CD4-positive, alpha-beta T cell (primary cell): ENCODE measurements at regions of chr1 and their contacts with region 1.

Region 1: GRCh38 chr1:155091071-155091709 is 12.6 kb downstream of the EFNA3 start:
- DNase-seq: peak; percentile 67 to 88 (median 76)
- ATAC-seq: peak; percentile 91
- H3K4me3 ChIP-seq: no peak overlapping the region
- H3K4me3 Mint-ChIP-seq: no peak overlapping the region
- H3K27ac ChIP-seq: no peak overlapping the region
- H3K27ac Mint-ChIP-seq: no peak overlapping the region
- H3K4me1 ChIP-seq: peaks cover 15% of the 10 kb centered on the region
- H3K4me1 Mint-ChIP-seq: peaks cover 12% of the 10 kb centered on the region
- H3K27me3 ChIP-seq: no peaks in the 10 kb centered on the region
- H3K27me3 Mint-ChIP-seq: no peaks in the 10 kb centered on the region
- CTCF ChIP-seq: peak; percentile 91

Region 2: DNA sequence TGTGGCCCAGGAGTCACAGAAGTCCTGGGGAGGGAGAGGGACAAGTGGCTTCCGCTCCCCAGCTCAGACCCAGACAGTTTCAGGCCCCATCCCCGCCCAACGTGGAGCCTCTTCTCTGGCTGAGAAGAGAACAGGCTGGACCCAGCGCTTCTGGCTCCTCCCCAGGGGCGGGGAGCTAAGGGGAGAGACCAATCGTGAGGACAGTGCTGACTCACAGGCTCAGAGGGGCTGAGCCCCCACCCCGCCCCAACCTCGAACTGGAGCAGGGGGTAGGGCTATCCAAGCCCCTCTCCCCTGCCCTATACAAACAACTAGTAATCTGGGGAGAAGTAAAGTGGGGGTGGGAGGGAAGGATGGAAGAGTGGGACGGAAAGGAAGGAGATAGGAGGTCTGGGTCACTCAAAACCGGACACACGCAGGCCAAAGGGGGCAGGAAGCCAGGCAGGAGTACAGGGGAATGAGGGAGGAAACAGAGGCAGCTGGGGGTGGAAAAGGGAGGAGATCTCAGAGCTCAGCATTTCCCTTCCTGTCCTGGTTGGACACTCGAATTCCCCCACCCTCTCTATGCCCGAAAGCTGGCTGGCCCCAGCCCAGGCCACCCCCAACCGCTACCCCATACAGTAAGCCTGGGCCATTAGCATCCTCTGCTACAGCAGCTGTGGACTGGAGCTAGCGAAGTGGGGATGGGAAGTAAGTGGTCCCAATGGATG is 120.4 kb before region 1 on chr1 and contains the start of gene SHC1:
- CTCF ChIA-PET with region 1: no interaction called
- POLR2A ChIA-PET with region 1: no interaction called
- intact Hi-C with region 1: no loop called
- DNase-seq: peak in 5 of 14 experiments; percentile 27 to 65 (median 50)
- ATAC-seq: no peak
- H3K4me3 ChIP-seq: no peak within 1 kb of the TSS
- H3K4me3 Mint-ChIP-seq: peak within 1 kb of the TSS; percentile 55
- H3K27ac ChIP-seq: peak within 1 kb of the TSS in 1 of 2 donors; percentile 34
- H3K27ac Mint-ChIP-seq: peak within 1 kb of the TSS; percentile 70
- H3K4me1 ChIP-seq: peaks cover 55% of the 10 kb centered on the region
- H3K4me1 Mint-ChIP-seq: peaks cover 30% of the 10 kb centered on the region
- H3K27me3 ChIP-seq: no peaks in the 10 kb centered on the region
- H3K27me3 Mint-ChIP-seq: no peaks in the 10 kb centered on the region
- CTCF ChIP-seq: no peak
- total RNA-seq, gene SHC1: 59.9 to 60.0 TPM

Region 3: DNA sequence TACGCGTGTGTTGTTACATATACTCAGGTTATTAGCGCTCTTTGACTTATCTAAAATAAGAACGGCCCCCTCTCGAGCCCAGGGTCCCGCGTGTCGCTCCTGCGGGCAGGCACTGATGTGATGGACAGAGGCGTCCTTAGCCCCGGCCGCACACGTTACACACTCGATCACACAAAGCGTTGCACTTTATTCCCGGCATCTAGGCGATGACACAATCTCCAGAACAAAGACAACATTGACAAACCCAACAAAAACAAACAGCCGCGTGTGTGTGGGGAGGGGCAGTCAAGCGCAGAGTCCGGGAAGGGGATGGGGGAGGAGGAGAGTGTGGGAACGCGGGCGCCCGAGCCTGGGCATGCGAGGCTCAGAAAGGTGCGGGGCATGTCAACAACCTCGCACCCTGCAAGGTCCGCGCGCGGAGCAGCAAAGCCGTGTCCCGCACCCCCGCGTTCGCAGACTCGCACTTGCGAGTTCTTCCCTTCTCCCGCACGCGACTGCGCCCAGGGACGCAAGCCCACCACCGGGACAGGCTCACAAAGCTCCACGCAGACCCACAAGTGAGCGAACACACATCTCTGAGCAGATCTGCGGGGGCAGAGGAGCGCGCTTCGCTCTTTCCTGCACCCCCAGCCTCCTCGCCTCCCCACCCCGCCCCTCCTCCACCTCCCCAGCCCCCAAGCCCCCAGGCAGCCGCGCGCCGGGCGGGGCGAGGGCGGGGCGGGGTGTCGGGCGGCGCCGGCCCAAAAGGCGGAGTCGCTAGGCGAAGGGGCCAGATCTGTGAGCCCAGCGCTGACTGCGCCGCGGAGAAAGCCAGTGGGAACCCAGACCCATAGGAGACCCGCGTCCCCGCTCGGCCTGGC is 36.1 kb after region 1 on chr1 and contains the start of gene EFNA1:
- CTCF ChIA-PET with region 1: interaction called, 5 read pairs
- POLR2A ChIA-PET with region 1: no interaction called
- intact Hi-C with region 1: loop called (anchors 2 to 5 kb)
- DNase-seq: peak in 10 of 14 experiments; percentile 18 to 62 (median 46)
- ATAC-seq: peak; percentile 32
- H3K4me3 ChIP-seq: peak within 1 kb of the TSS; percentile 59
- H3K4me3 Mint-ChIP-seq: peak within 1 kb of the TSS; percentile 82
- H3K27ac ChIP-seq: no peak within 1 kb of the TSS
- H3K27ac Mint-ChIP-seq: peak within 1 kb of the TSS; percentile 82
- H3K4me1 ChIP-seq: peaks cover 41% of the 10 kb centered on the region
- H3K4me1 Mint-ChIP-seq: peaks cover 38% of the 10 kb centered on the region
- H3K27me3 ChIP-seq: peaks cover 7 to 15% of the 10 kb centered on the region in 2 experiments
- H3K27me3 Mint-ChIP-seq: peaks cover 29% of the 10 kb centered on the region
- CTCF ChIP-seq: no peak
- total RNA-seq, gene EFNA1: 4.2 to 5.9 TPM

Region 4: GRCh38 chr1:155167166-155168104 is 76.2 kb after region 1 on chr1:
- CTCF ChIA-PET with region 1: interaction called, 29 read pairs
- POLR2A ChIA-PET with region 1: interaction called, 9 read pairs
- intact Hi-C with region 1: loop called (anchors 1 kb)
- DNase-seq: peak; percentile 78 to 93 (median 84)
- ATAC-seq: peak; percentile 73
- H3K4me3 ChIP-seq: peak overlapping the region; percentile 9
- H3K4me3 Mint-ChIP-seq: peak overlapping the region; percentile 21
- H3K27ac ChIP-seq: no peak overlapping the region
- H3K27ac Mint-ChIP-seq: no peak overlapping the region
- H3K4me1 ChIP-seq: peaks cover 25% of the 10 kb centered on the region
- H3K4me1 Mint-ChIP-seq: peaks cover 26% of the 10 kb centered on the region
- H3K27me3 ChIP-seq: peaks cover 0 to 7% of the 10 kb centered on the region in 2 experiments
- H3K27me3 Mint-ChIP-seq: peaks cover 3% of the 10 kb centered on the region
- CTCF ChIP-seq: peak; percentile 81

Region 5: GRCh38 chr1:155227261-155228095 is 136.3 kb after region 1 on chr1:
- CTCF ChIA-PET with region 1: interaction called, 3 read pairs
- POLR2A ChIA-PET with region 1: no interaction called
- intact Hi-C with region 1: loop called (anchors 2 to 5 kb)
- DNase-seq: peak; percentile 96 to 100 (median 98)
- ATAC-seq: peak; percentile 93
- H3K4me3 ChIP-seq: peak overlapping the region; percentile 75
- H3K4me3 Mint-ChIP-seq: peak overlapping the region; percentile 72
- H3K27ac ChIP-seq: peak overlapping the region; percentile 82 to 87
- H3K27ac Mint-ChIP-seq: peak overlapping the region; percentile 74
- H3K4me1 ChIP-seq: peaks cover 25% of the 10 kb centered on the region
- H3K4me1 Mint-ChIP-seq: peaks cover 26% of the 10 kb centered on the region
- H3K27me3 ChIP-seq: no peaks in the 10 kb centered on the region
- H3K27me3 Mint-ChIP-seq: no peaks in the 10 kb centered on the region
- CTCF ChIP-seq: no peak

Region 6: DNA sequence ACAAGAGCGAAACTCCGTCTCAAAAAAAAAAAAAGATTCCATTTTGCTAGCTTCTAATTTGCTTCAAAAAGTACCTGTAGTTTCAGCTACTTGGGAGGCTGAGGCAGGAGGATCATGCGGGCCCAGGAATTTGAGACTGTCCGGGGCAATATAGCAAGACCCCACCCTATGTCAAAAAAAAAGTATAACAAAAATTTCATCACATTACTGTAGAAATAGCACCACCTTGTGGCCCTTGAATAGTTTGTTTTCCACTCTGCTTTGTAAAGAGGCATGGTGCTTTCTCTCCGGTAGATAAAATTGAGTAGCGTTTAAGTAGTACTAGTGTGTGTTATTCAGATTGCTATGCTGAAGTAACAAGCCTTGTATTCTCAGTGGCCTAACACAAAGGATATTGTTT is 500.6 kb after region 1 on chr1:
- CTCF ChIA-PET with region 1: no interaction called
- POLR2A ChIA-PET with region 1: no interaction called
- intact Hi-C with region 1: loop called in 1 of 2 experiments (anchors 10 kb)
- DNase-seq: peak in 6 of 14 experiments; percentile 7 to 78 (median 64)
- ATAC-seq: peak; percentile 72
- H3K4me3 ChIP-seq: no peak overlapping the region
- H3K4me3 Mint-ChIP-seq: no peak overlapping the region
- H3K27ac ChIP-seq: no peak overlapping the region
- H3K27ac Mint-ChIP-seq: no peak overlapping the region
- H3K4me1 ChIP-seq: no peaks in the 10 kb centered on the region
- H3K4me1 Mint-ChIP-seq: peaks cover 5% of the 10 kb centered on the region
- H3K27me3 ChIP-seq: no peaks in the 10 kb centered on the region
- H3K27me3 Mint-ChIP-seq: no peaks in the 10 kb centered on the region
- CTCF ChIP-seq: peak; percentile 63

Region 7: GRCh38 chr1:155713075-155713474 is 621.9 kb after region 1 on chr1:
- CTCF ChIA-PET with region 1: no interaction called
- POLR2A ChIA-PET with region 1: no interaction called
- intact Hi-C with region 1: no loop called
- DNase-seq: no peak
- ATAC-seq: no peak
- H3K4me3 ChIP-seq: no peak overlapping the region
- H3K4me3 Mint-ChIP-seq: no peak overlapping the region
- H3K27ac ChIP-seq: no peak overlapping the region
- H3K27ac Mint-ChIP-seq: no peak overlapping the region
- H3K4me1 ChIP-seq: peaks cover 4% of the 10 kb centered on the region
- H3K4me1 Mint-ChIP-seq: peaks cover 15% of the 10 kb centered on the region
- H3K27me3 ChIP-seq: no peaks in the 10 kb centered on the region
- H3K27me3 Mint-ChIP-seq: no peaks in the 10 kb centered on the region
- CTCF ChIP-seq: no peak